ENCODE measurements at regions of chr2 and their contacts with region 1.

Region 1: GRCh38 chr2:181715033-181715630 is 34.8 kb upstream of the NEUROD1 start:
- DNase-seq: no peak

Region 2: GRCh38 chr2:180125245-180125962 is 1589.7 kb before region 1 on chr2:
- intact Hi-C with region 1: loop called (anchors 5 kb)
- DNase-seq: no peak

Region 3: DNA sequence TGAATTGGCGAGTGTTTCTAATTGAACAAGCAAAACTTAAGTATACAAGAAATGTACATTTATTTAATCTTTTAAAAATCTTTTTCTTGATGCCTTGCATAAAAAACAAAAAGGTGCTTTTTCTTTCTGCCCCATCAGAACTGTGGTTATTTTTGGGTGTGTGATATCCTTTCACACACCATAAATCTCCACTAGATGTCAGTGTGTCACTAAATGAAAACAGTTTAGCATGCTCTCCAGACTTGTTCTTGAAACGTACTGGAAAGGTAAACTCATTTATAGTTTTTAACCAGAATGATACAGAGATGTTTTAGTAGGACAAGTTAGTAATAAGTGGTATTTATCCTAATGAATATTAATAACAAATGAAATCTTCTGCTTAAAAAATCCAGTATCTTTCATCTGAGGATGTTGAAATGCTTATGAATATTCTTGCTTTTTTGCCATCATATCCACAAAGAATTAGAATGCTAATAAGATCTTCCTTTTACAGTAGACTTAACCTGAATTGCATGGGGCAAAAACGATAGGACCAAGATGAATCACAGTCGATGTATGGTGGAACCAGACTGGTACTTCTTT is 637.9 kb before region 1 on chr2:
- intact Hi-C with region 1: loop called (anchors 10 kb)
- DNase-seq: no peak

Region 4: GRCh38 chr2:181104512-181105115 is 610.5 kb before region 1 on chr2:
- intact Hi-C with region 1: loop called (anchors 2 kb)
- DNase-seq: no peak

Region 5: DNA sequence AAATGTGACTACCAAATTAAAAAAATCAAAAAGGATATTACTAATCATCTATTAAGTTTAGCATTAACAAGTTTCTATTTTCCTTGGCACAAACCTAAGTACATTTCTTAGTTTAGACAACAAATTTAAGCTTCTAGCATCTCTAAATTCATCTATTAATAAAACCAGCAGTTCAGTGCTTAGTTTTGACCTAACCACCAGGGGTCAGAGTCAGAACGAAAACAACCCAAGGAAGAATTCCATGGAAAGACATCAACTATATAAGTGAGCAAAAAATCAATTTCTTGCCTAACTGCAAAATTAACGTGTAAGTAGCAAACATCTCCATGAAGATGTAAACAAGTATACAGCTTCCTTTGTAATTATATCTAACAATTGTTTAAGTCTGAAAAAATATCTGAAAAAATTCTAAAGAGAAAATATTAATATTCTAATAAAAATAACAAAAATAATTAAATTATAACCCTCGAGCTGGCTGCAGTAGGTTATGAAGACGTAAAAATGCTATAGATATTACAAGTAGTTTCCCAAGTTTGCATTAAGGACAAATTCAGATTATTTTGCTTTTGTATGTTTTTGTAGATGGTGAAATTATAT is 141.9 kb before region 1 on chr2:
- intact Hi-C with region 1: loop called (anchors 5 kb)
- DNase-seq: no peak

Region 6: DNA sequence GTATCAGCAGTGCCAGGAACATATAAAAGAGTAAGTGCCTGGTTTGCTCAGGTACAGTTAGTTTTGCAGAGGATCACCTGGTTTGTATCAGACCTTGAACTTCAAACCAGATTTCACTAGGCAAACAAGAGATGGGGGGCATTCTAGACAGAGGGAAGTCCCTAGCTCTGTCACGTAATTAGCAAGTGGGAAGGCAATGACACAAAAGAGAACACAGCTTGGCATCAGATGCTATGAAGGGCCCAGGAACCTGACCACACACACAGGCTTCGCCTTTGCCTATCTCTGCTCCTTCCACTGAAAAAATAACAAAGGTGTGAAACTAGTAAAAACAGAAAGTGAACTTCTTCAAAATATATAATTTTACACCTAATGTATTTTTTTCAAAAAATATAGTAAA is 120.8 kb before region 1 on chr2:
- intact Hi-C with region 1: no loop called
- DNase-seq: no peak

Region 7: DNA sequence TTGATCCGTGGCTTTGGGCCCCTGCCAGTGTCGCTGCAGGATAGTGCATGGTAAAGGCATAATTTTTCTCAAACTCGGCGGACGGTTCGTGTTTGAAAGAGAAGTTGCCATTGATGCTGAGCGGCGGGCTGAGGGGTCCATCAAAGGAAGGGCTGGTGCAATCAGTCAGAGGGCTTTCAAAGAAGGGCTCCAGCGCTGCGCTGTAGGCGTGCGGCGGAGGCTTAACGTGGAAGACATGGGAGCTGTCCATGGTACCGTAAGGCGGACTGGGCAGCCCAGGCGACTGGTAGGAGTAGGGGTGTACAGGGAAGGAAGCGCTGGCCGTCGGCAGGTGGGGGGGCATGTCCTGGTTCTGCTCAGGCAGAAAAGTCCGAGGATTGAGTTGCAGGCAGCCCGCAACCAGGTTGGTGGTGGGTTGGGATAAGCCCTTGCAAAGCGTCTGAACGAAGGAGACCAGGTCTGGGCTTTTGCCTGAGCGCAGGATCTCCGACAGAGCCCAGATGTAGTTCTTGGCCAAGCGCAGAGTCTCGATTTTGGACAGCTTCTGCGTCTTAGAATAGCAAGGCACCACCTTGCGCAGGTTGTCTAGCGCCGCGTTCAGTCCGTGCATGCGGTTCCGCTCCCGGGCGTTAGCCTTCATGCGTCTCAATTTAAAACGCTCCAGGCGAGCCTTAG is 37.1 kb before region 1 on chr2:
- intact Hi-C with region 1: no loop called
- DNase-seq: no peak